HCT116 (cell line): ENCODE measurements at regions of chr1 and their contacts with region 1.

Region 1: DNA sequence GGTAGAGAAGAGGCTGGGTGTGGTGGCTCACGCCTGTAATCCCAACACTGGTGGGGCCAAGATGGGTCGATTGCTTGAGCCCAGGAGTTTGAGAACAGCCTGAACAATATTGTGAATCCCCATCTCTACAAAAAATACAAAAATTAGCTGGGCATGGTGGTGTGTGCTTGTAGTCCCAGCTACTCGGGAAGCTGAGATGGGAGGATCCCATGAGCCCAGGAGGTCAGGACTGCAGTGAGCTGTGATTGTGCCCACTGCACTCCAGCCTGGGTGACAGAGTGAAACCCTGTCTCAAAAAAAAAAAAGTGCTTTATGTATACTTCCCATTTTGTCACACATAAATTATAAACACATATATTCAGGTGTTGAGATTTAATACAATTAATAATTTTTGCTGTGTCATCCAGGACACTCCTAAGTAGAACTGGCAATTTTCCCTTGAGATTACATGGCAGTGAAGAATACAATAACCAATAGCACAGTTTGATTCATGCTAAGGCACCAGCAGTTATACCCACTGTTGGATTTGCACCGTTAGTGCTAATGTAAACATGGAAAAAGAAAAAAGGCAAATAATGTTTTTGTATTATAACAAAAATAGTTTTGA is 15.5 kb downstream of the GABPB2 start:
- DNase-seq: no peak
- ATAC-seq: no peak
- H3K4me3 ChIP-seq: no peak overlapping the region
- H3K27ac ChIP-seq: no peak overlapping the region
- H3K4me1 ChIP-seq: no peaks in the 10 kb centered on the region
- H3K27me3 ChIP-seq: no peaks in the 10 kb centered on the region
- CTCF ChIP-seq: no peak
- POLR2A ChIP-seq: no peak
- RAD21 ChIP-seq: no peak

Region 2: DNA sequence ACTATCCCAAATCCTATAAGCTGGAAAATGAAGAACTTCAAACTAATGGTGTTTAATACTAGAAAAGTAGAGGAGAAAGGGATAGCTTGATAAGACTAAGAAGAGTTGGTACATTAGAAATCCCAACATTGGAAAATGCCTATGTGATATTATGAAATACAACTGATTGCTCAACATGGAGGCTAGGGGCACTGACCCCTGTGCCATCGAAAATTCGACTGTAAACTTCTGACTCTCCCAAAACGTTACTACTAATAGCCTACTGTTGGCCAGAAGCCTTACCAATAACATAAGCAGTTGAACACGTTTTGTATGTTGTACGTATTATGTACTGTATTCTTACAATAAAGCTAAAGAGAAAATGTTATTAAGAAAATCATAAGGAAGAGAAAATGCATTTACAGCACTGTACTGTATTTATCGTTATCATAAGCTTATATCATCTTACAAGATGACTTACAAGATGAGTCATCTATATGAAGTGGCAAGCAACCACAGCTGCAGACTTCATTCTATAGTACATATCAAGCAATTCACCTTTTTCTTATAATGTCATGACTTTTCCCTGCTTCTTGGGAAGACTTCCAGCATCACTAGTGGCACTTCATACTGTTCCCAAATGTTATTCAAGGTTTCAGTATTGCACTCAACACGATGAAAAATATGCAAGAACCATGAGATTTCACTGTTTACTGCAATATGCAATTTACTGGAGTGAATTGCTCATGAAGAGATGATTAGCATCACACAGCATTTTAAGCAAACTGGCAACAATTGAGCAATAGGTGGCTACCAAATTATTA is 265.1 kb before region 1 on chr1:
- CTCF ChIA-PET with region 1: no interaction called
- POLR2A ChIA-PET with region 1: no interaction called
- RAD21 ChIA-PET with region 1: no interaction called
- intact Hi-C with region 1: no loop called
- DNase-seq: no peak
- ATAC-seq: no peak
- H3K4me3 ChIP-seq: no peak overlapping the region
- H3K27ac ChIP-seq: no peak overlapping the region
- H3K4me1 ChIP-seq: no peaks in the 10 kb centered on the region
- H3K27me3 ChIP-seq: no peaks in the 10 kb centered on the region
- CTCF ChIP-seq: no peak
- POLR2A ChIP-seq: no peak
- RAD21 ChIP-seq: no peak

Region 3: GRCh38 chr1:151070474-151071276 is 15.4 kb before region 1 on chr1 and contains the start of gene GABPB2:
- CTCF ChIA-PET with region 1: interaction called, 11 read pairs
- POLR2A ChIA-PET with region 1: interaction called, 4 read pairs
- RAD21 ChIA-PET with region 1: no interaction called
- intact Hi-C with region 1: no loop called
- DNase-seq: peak; percentile 91
- ATAC-seq: peak; percentile 90
- H3K4me3 ChIP-seq: peak within 1 kb of the TSS; percentile 74 to 78
- H3K27ac ChIP-seq: peak within 1 kb of the TSS; percentile 98
- H3K4me1 ChIP-seq: peaks cover 22 to 32% of the 10 kb centered on the region in 2 experiments
- H3K27me3 ChIP-seq: no peaks in the 10 kb centered on the region
- CTCF ChIP-seq: peak; percentile 50 to 89 (median 87); a peak in 5 of 6 replicates
- POLR2A ChIP-seq: peak; percentile 92
- RAD21 ChIP-seq: peak; percentile 62
- total RNA-seq, gene GABPB2: 7.7 TPM